Esophagus muscularis mucosa (tissue), 4 donors: ENCODE measurements at regions of chr1 and their contacts with region 1.

Region 1: GRCh38 chr1:170967042-170967910 is 31.9 kb downstream of the MROH9 start:
- DNase-seq: no peak
- H3K4me3 ChIP-seq: no peak overlapping the region
- H3K27ac ChIP-seq: no peak overlapping the region
- H3K4me1 ChIP-seq: no peaks in the 10 kb centered on the region
- H3K27me3 ChIP-seq: no peaks in the 10 kb centered on the region
- CTCF ChIP-seq: peak; percentile 67 to 76 (median 69)
- EP300 ChIP-seq: no peak
- POLR2A ChIP-seq: no peak

Region 2: DNA sequence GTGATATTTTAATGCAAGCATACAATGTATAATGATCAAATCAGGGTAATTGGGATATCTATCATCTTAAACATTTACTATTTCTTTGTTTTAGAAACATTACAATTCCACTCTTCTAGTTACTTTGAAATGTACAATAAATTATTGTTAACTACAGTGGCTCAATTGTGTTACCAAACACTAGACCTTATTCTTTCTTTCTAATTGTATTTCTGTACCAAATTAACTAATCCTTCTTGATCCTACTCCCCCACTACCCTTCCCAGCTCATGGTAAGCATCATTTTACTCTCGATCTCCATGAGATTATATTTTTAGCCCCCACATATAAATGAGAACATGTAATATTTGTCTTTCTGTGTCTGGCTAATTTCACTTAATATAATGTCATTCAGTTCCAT is 126.9 kb before region 1 on chr1:
- intact Hi-C with region 1: no loop called
- DNase-seq: no peak
- H3K4me3 ChIP-seq: no peak overlapping the region
- H3K27ac ChIP-seq: no peak overlapping the region
- H3K4me1 ChIP-seq: no peaks in the 10 kb centered on the region
- H3K27me3 ChIP-seq: no peaks in the 10 kb centered on the region
- CTCF ChIP-seq: no peak
- EP300 ChIP-seq: no peak
- POLR2A ChIP-seq: no peak

Region 3: DNA sequence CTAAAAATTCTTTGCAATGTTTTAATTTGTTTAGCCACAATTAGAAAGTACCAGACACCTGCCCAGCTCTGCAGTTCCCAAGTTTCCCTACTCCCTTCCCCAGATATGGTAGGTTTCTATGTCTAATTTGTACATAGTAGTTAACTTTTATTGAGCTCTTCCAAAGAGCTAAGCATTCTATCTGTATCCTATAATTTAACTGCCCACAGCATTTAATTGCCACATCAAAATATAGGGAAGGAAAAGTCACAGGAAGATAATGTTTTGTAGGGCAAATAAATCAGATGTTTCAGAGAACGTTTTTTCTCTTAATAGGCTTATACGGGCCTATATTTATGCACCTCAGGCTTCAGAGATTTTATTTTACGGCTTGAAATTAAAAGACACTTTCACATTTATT is 107.8 kb after region 1 on chr1:
- intact Hi-C with region 1: loop called (anchors 10 kb)
- DNase-seq: no peak
- H3K4me3 ChIP-seq: no peak overlapping the region
- H3K27ac ChIP-seq: no peak overlapping the region
- H3K4me1 ChIP-seq: no peaks in the 10 kb centered on the region
- H3K27me3 ChIP-seq: no peaks in the 10 kb centered on the region
- CTCF ChIP-seq: no peak
- EP300 ChIP-seq: no peak
- POLR2A ChIP-seq: no peak